Keratinocyte (primary cell): ENCODE measurements at regions of chr20 and their contacts with region 1.

Region 1: GRCh38 chr20:35192111-35192872 is 20.4 kb downstream of the PROCR start:
- DNase-seq: no peak
- H3K4me3 ChIP-seq: no peak overlapping the region
- H3K27ac ChIP-seq: no peak overlapping the region
- H3K4me1 ChIP-seq: no peaks in the 10 kb centered on the region
- H3K27me3 ChIP-seq: no peaks in the 10 kb centered on the region
- CTCF ChIP-seq: no peak

Region 2: GRCh38 chr20:35264781-35265180 is 72.5 kb after region 1 on chr20:
- dilution Hi-C with region 1: loop called (anchors 5 kb)
- DNase-seq: no peak
- H3K4me3 ChIP-seq: no peak overlapping the region
- H3K27ac ChIP-seq: no peak overlapping the region
- H3K4me1 ChIP-seq: no peaks in the 10 kb centered on the region
- H3K27me3 ChIP-seq: no peaks in the 10 kb centered on the region
- CTCF ChIP-seq: peak in 1 of 3 experiments; percentile 46